ENCODE measurements at regions of chr5 and their contacts with region 1.

Region 1: GRCh38 chr5:3913279-3913678 is 317.6 kb downstream of the IRX1 start:
- DNase-seq: no peak
- H3K4me3 ChIP-seq: no peak overlapping the region
- H3K27ac ChIP-seq: no peak overlapping the region
- H3K4me1 ChIP-seq: no peaks in the 10 kb centered on the region
- H3K27me3 ChIP-seq: no peaks in the 10 kb centered on the region
- CTCF ChIP-seq: no peak
- EP300 ChIP-seq: no peak
- POLR2A ChIP-seq: no peak

Region 2: DNA sequence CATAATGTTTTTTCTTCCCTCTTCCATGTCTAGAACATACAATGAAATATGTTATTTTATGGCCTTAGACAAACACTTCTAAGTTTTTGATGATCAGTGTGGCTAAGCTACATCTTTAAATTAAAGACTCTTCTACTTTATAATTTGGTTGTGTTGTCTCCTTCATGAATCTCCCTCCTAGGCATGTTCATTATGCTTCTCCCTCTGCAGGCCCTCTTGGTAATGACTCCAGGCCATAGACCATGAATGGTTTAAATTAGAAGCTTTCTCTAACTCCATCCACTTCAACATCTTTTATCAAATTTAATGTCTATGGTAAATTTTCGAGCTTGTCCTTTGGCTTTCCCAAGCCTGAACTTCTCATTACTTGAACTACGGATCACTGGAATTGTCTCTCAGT is 884.2 kb after region 1 on chr5:
- in situ Hi-C with region 1: no loop called
- intact Hi-C with region 1: loop called (anchors 5 kb)
- DNase-seq: no peak
- H3K4me3 ChIP-seq: no peak overlapping the region
- H3K27ac ChIP-seq: no peak overlapping the region
- H3K4me1 ChIP-seq: no peaks in the 10 kb centered on the region
- H3K27me3 ChIP-seq: no peaks in the 10 kb centered on the region
- CTCF ChIP-seq: no peak
- EP300 ChIP-seq: no peak
- POLR2A ChIP-seq: no peak

Measured in transverse colon (tissue), 4 donors.